Caco-2 (cell line): ENCODE measurements at regions of chr2 and their contacts with region 1.

Region 1: DNA sequence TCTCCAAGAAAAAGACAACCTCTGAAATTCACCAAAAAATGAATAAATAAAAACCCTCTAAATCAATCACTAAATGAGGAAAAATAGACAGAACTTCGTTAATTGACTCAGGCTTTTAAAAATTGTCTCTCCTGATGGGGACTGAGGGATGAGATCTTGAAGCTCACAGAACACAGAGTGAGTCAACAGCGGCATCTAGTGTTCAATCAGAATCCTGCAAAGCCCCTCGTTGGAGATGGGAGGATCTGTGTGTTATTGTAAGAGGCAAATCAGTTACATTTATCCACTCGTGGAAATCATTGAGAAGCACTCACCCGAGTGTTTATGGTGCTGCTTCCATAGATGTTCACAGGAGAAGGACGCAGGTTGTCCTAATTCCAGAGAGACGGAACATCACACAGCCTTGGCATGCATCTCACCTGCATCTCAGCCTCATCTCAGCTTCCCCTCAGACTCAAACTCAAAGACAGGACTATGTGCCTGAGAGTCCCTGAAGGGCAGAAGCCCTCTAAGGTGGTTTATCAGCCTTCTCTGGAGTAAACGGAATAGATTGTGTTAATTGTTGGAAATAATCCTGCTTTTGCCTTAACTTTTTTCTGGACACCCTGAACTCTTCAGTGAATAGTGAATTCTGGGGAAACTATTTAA is 82.0 kb downstream of the MREG start:
- DNase-seq: peak; percentile 70 to 81
- H3K4me3 ChIP-seq: no peak overlapping the region
- H3K4me3 Mint-ChIP-seq: peak overlapping the region; percentile 13
- H3K27ac Mint-ChIP-seq: peak overlapping the region; percentile 82
- H3K4me1 ChIP-seq: peaks cover 27% of the 10 kb centered on the region
- H3K4me1 Mint-ChIP-seq: peaks cover 26% of the 10 kb centered on the region
- H3K27me3 ChIP-seq: no peaks in the 10 kb centered on the region
- H3K27me3 Mint-ChIP-seq: no peaks in the 10 kb centered on the region
- CTCF ChIP-seq: peak; percentile 92 to 93

Region 2: DNA sequence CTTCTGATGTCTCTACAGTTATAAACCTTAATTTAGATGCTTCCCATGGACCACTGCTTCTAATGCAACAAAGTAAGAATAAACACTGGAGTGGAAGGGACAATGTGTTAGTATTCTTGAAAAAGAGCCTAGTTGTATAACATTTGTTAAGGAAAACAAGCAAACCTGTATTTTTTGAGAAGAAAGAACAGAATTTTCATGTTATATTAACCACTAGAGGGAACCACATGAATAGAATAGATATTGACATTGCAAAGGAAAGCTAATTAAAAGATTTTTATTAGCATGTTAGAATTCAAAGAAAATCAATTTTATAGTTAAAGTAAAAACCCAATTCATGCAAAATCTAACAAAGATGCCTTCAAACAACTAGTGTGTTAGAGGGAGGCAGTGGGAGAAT is 970.7 kb before region 1 on chr2:
- CTCF ChIA-PET with region 1: interaction called, 4 read pairs
- POLR2A ChIA-PET with region 1: no interaction called
- intact Hi-C with region 1: loop called (anchors 1 kb)
- DNase-seq: no peak
- H3K4me3 ChIP-seq: no peak overlapping the region
- H3K4me3 Mint-ChIP-seq: no peak overlapping the region
- H3K27ac Mint-ChIP-seq: no peak overlapping the region
- H3K4me1 ChIP-seq: no peaks in the 10 kb centered on the region
- H3K4me1 Mint-ChIP-seq: no peaks in the 10 kb centered on the region
- H3K27me3 ChIP-seq: no peaks in the 10 kb centered on the region
- H3K27me3 Mint-ChIP-seq: peaks cover 3% of the 10 kb centered on the region
- CTCF ChIP-seq: peak in 1 of 2 experiments; percentile 35

Region 3: GRCh38 chr2:215269397-215270119 is 661.8 kb before region 1 on chr2:
- CTCF ChIA-PET with region 1: no interaction called
- POLR2A ChIA-PET with region 1: no interaction called
- intact Hi-C with region 1: loop called (anchors 5 kb)
- DNase-seq: peak; percentile 72 to 78
- H3K4me3 ChIP-seq: no peak overlapping the region
- H3K4me3 Mint-ChIP-seq: no peak overlapping the region
- H3K27ac Mint-ChIP-seq: no peak overlapping the region
- H3K4me1 ChIP-seq: peaks cover 3% of the 10 kb centered on the region; the same call in 1 of the 2 replicates
- H3K4me1 Mint-ChIP-seq: peaks cover under 1% of the 10 kb centered on the region
- H3K27me3 ChIP-seq: no peaks in the 10 kb centered on the region
- H3K27me3 Mint-ChIP-seq: no peaks in the 10 kb centered on the region
- CTCF ChIP-seq: peak; percentile 76 to 85

Region 4: DNA sequence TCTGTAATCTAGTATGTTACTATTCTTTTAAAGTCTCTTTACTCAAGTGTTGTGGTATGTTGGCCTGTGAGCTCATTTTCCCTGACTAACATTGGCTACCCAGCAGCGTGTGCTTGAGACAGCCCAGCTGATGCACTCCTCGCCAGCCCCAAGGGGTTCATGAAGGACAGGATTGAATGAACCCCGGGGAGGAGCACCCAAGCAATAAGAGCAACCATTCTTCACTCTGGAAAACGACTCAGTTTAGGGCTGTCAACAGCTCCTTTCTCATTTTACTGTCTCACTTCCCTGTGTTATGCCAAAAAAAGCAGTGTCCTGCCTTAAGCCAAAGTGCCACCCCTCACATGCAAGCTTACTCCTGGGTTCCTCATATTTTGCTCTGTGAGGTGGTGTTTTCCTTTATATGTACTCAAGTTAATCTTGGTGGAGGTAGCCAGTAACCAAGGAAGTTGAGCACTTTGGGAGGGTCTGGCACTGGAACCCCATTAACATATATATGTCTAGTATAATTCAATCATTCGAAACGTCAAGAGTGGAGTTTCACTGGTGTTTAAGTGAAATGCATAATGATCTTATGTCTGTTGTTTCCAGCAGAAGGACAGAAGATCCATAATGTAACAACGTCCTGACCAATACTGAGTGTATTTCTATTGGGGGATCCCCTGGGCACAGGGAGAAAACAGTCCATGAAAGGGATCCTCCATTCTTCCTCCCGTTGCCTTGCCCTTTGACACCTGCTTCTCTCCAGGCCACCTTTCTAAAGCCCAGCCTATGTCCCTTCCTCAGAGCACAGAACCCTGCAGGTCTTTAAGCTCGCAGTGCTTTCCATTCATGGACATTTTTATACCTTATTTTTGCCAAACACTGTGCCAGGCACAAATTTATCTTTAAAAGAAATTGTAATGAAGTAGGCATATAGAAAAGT is 576.3 kb before region 1 on chr2:
- CTCF ChIA-PET with region 1: interaction called, 3 read pairs
- POLR2A ChIA-PET with region 1: interaction called, 5 read pairs
- intact Hi-C with region 1: loop called (anchors 2 kb)
- DNase-seq: no peak
- H3K4me3 ChIP-seq: no peak overlapping the region
- H3K4me3 Mint-ChIP-seq: no peak overlapping the region
- H3K27ac Mint-ChIP-seq: peak overlapping the region; percentile 86
- H3K4me1 ChIP-seq: no peaks in the 10 kb centered on the region
- H3K4me1 Mint-ChIP-seq: peaks cover 6% of the 10 kb centered on the region
- H3K27me3 ChIP-seq: no peaks in the 10 kb centered on the region
- H3K27me3 Mint-ChIP-seq: no peaks in the 10 kb centered on the region
- CTCF ChIP-seq: no peak

Region 5: DNA sequence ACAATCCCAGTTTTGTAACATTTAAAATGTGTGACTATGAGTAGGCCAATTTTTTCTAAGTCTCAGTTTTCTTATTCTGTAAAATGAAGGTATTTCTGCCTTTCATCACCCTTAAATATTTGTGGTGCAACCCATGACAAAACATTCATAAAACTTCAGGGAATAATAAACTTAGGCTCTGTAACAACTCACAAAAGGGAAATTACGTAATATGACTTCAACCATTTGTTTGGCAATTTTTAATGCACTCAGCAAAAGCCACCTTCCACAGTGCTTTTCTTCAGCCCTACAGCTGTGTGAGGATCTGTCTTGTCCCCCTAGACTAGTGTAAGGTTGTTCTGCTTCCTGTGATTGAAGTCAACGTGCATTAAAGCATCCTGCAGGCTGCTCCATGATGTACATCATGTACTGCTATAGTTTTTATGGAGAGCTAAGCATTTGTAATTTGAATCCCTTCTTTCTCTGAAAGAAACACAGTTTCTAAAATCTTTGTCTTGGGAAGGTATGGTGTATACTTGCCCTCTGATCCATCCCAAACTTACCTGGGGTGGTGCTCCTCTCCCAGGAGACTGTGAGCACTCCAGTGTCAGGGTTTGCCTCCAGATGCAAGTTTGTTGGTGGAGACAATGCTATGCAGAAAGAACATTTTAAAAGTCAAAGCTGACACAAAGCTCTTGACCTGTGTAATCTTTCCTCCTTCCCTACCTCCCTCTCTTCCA is 534.6 kb before region 1 on chr2:
- CTCF ChIA-PET with region 1: no interaction called
- POLR2A ChIA-PET with region 1: no interaction called
- intact Hi-C with region 1: loop called (anchors 2 kb)
- DNase-seq: no peak
- H3K4me3 ChIP-seq: no peak overlapping the region
- H3K4me3 Mint-ChIP-seq: no peak overlapping the region
- H3K27ac Mint-ChIP-seq: no peak overlapping the region
- H3K4me1 ChIP-seq: peaks cover 10% of the 10 kb centered on the region; the same call in 1 of the 2 replicates
- H3K4me1 Mint-ChIP-seq: peaks cover 29% of the 10 kb centered on the region
- H3K27me3 ChIP-seq: no peaks in the 10 kb centered on the region
- H3K27me3 Mint-ChIP-seq: no peaks in the 10 kb centered on the region
- CTCF ChIP-seq: no peak

Region 6: DNA sequence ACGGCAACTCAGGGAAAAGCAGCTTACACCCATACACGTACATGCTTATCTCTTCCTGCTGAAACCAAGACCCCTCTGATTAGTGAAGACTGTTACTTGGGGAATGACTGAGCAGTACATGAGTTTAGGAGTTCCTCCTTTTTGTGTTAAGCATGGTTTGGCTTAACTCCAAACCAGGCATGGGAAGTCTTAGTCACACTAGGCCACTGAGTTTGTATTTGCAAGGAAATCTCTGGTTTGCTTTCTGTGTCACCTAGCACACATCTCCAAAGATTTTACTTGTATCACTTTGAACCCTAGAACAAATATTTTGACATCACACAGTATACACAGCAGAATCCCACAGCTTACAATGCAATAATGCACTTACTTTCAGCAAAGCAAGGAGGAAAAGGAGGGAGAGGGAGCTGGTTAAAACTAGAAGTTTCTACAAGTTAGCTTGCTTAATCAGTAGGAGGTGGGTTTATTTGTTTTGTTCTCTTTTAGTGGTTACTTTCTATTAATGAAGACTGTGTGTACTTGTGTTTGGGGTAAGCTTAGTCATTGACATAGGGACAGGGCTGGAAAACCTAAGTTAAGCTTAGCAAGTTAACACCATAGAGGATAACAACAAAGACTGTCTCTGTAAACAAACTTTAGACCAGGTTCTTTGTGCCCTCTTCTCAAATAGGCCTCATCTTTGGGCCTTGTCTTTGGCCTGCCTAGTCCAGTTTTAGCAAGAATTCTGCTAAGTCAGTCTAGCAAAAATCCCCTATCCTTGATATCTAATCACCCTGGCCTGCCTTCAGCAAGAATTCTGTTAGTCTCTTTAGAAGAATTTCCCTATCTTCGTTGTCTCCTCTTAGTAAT is 137.4 kb before region 1 on chr2:
- CTCF ChIA-PET with region 1: interaction called, 7 read pairs
- POLR2A ChIA-PET with region 1: no interaction called
- intact Hi-C with region 1: loop called (anchors 1 kb)
- DNase-seq: peak in 1 of 2 experiments; percentile 62
- H3K4me3 ChIP-seq: no peak overlapping the region
- H3K4me3 Mint-ChIP-seq: no peak overlapping the region
- H3K27ac Mint-ChIP-seq: peak overlapping the region; percentile 81
- H3K4me1 ChIP-seq: peaks cover 41% of the 10 kb centered on the region
- H3K4me1 Mint-ChIP-seq: peaks cover 48% of the 10 kb centered on the region
- H3K27me3 ChIP-seq: no peaks in the 10 kb centered on the region
- H3K27me3 Mint-ChIP-seq: no peaks in the 10 kb centered on the region
- CTCF ChIP-seq: no peak

Region 7: GRCh38 chr2:215973954-215974702 is 42.7 kb after region 1 on chr2:
- CTCF ChIA-PET with region 1: no interaction called
- POLR2A ChIA-PET with region 1: no interaction called
- intact Hi-C with region 1: no loop called
- DNase-seq: peak in 1 of 2 experiments; percentile 27
- H3K4me3 ChIP-seq: no peak overlapping the region
- H3K4me3 Mint-ChIP-seq: no peak overlapping the region
- H3K27ac Mint-ChIP-seq: no peak overlapping the region
- H3K4me1 ChIP-seq: no peaks in the 10 kb centered on the region; the same call in 1 of the 2 replicates
- H3K4me1 Mint-ChIP-seq: peaks cover 14% of the 10 kb centered on the region
- H3K27me3 ChIP-seq: no peaks in the 10 kb centered on the region
- H3K27me3 Mint-ChIP-seq: no peaks in the 10 kb centered on the region
- CTCF ChIP-seq: no peak